ENCODE measurements at regions of chr11 and their contacts with region 1.

Region 1: DNA sequence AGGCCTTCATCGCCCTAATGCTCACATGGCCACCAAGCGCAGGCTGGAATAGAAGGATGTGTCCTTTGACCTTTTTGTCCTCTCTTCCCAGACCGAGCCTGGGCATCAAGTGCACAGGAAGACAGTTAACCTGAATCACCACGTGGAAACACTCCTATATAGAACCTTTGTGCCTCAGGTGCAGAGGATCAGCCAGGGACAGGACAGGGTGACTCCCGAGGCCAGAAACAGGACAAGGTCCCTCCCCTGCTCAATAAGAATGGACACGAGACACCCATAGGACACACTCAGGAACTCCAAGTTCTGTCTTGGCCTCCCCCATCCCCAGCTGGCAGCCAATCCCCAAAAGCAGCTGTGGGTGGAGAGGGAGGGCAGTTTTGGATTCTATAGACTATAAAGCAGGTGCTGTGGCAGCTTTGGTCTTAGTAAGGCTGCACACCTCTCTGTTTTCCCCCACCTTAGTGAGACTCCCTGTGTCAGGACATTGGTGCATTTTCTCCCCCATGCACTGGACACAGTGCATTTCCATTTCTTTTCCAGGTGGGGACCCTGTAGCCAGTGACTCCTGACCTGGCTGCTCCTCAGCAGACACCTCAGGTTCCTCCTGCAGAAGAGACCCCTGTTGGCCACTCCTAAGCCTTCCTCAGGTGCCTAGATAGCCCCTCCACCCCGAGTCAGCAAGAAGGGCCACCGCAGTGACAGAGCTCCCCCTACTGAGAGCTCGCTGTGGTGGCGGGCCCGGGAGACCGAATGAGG is 43.6 kb upstream of the POU2AF1 start:
- DNase-seq: peak; percentile 75
- ATAC-seq: peak; percentile 94
- H3K4me3 Mint-ChIP-seq: no peak overlapping the region
- H3K27ac Mint-ChIP-seq: no peak overlapping the region
- H3K4me1 Mint-ChIP-seq: peaks cover 8% of the 10 kb centered on the region
- H3K27me3 Mint-ChIP-seq: no peaks in the 10 kb centered on the region
- CTCF ChIP-seq: peak; percentile 85

Region 2: GRCh38 chr11:111283945-111284481 is 138.7 kb before region 1 on chr11:
- CTCF ChIA-PET with region 1: interaction called, 330 read pairs
- POLR2A ChIA-PET with region 1: interaction called, 3 read pairs
- intact Hi-C with region 1: loop called (anchors 1 kb)
- DNase-seq: no peak
- ATAC-seq: no peak
- H3K4me3 Mint-ChIP-seq: no peak overlapping the region
- H3K27ac Mint-ChIP-seq: no peak overlapping the region
- H3K4me1 Mint-ChIP-seq: no peaks in the 10 kb centered on the region
- H3K27me3 Mint-ChIP-seq: no peaks in the 10 kb centered on the region
- CTCF ChIP-seq: no peak

Region 3: DNA sequence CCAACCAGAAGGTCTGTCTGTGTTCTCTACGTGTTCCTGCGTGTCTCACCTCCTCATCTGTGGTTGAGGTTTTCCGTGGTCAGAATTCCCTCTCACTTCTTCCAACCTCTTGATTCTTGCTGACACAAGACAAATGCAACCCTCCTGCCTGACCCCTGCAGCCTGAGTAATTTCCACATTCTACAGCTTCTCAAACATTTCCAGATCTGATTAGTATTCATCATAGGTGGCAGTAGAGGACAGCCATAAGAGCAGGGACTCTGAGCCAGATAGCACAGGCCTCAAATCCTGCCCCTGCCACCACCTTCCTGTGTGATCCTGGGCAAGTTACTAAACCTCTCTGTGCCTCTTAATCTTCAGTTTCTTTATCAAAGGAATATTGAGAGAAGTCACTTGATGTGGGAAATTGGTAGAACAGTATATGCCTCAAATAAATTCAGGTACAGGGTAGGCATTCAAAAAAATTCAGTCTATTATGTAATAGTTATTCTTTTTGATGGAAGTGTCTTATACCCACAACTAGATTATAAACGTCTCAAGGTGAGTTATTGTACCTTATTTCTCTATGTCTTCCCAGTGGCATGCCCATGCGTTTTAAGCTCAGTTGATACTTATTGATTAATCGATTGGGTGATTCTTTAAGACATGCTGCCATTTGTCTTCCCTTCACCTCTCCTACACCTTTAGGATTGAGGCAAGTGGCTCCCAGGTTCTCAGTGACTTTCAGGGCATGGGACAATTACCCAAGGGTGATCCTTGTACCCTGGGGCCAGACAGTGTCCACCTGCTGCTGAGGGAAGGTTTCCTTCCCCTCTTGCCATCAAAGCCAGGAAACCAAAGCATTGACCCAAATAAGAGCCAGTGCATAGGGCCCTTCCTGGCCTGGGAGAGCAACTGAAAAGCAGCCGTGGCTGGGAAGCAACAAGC is 63.2 kb before region 1 on chr11:
- CTCF ChIA-PET with region 1: interaction called, 32 read pairs
- POLR2A ChIA-PET with region 1: no interaction called
- intact Hi-C with region 1: loop called (anchors 5 kb)
- DNase-seq: peak; percentile 26
- ATAC-seq: peak; percentile 81
- H3K4me3 Mint-ChIP-seq: no peak overlapping the region
- H3K27ac Mint-ChIP-seq: no peak overlapping the region
- H3K4me1 Mint-ChIP-seq: no peaks in the 10 kb centered on the region
- H3K27me3 Mint-ChIP-seq: no peaks in the 10 kb centered on the region
- CTCF ChIP-seq: no peak

Region 4: DNA sequence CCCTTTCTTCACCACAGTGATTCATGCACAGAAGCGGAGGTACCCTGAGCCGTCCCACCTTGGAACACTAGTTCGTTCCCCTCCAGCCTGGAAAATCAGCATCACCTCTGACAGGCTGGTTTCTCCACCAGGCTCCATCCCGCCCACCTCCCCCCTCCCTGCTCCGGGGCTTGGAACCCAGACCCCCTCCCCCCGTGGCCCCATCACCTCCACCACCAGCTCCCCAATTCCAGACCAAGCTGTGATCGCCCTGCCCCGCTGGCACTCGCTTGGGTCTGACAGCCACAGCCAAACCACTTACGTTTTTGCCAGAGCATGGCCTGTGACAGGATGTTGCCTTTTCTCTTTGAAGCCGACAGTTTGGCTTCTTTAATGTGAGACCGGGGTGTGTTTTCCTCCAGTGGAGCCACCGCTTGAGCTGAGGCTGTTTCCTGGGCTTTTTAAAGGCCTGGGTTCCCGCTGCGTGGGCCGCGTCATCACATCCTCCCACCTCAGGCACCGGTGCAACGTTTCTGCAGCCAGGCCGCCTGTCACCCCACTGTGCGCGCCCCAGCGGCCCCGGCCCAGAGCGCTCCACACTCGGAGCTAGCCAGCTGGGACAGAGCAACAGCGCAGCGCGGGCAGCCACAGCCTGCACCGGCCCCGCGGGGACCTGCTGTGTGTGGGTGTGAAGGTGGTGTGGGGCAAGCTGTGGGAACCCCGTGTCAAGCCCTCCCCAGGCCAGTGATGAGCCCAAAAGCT is 43.6 kb before region 1 on chr11 and contains the start of gene POU2AF1:
- CTCF ChIA-PET with region 1: interaction called, 4 read pairs
- POLR2A ChIA-PET with region 1: interaction called, 9 read pairs
- intact Hi-C with region 1: loop called (anchors 5 kb)
- DNase-seq: peak; percentile 91
- ATAC-seq: peak; percentile 76
- H3K4me3 Mint-ChIP-seq: peak within 1 kb of the TSS; percentile 70
- H3K27ac Mint-ChIP-seq: peak within 1 kb of the TSS; percentile 97
- H3K4me1 Mint-ChIP-seq: peaks cover 63% of the 10 kb centered on the region
- H3K27me3 Mint-ChIP-seq: no peaks in the 10 kb centered on the region
- CTCF ChIP-seq: no peak
- total RNA-seq, gene POU2AF1: 3.6 to 4.5 TPM

Region 5: DNA sequence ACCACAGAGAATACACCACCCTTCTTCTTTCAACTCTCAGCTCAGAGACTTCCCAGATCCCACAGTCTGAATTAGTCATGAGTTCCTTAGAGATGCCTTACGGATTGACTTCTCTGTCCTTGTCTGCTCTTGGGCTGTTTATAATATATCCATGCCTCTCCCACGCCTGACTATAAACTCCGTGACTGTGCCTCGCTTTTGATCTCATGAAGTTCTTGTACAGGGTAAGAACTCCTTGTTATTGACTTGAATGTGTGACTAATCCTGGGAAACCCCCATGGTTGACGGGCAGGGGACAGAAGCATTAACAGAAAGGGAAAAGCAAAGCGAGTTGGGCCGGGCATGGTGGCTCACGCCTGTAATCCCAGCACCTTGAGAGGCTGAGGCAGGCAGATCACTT is 18.8 kb after region 1 on chr11:
- CTCF ChIA-PET with region 1: interaction called, 78 read pairs
- POLR2A ChIA-PET with region 1: no interaction called
- intact Hi-C with region 1: no loop called
- DNase-seq: peak; percentile 44
- ATAC-seq: no peak
- H3K4me3 Mint-ChIP-seq: no peak overlapping the region
- H3K27ac Mint-ChIP-seq: no peak overlapping the region
- H3K4me1 Mint-ChIP-seq: peaks cover 16% of the 10 kb centered on the region
- H3K27me3 Mint-ChIP-seq: no peaks in the 10 kb centered on the region
- CTCF ChIP-seq: no peak

Region 6: DNA sequence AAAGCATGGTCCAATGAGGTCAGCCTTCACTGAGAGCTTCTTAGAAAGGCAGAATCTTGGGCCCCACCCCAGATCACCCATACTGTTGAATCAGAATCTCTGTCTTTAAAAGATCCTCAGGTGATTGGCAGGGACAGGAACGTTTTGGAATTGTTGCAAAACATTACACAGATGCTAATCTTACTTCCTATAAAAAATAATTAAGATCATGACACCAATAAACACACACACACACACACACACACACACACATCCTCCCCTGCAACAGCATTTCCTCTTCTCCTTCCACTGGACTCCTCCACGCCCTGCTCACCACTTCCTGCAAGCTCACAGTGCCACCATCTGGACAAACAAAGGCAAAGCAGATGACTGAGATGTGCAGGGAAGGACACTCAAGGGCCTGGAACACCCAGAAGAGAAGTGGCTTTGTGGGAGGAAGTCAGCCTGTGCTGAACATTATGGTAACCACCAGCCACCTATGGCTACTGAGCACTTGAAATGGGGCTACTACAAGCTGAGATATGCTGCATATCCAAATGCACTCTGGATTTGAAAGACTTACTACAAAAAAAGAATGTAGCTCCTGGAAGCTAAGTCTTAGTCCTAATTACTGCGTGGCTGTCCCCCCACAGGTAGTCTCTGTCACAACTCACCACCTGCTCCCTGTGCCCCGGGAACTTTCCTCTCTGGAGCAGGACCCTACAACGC is 23.9 kb after region 1 on chr11:
- CTCF ChIA-PET with region 1: interaction called, 78 read pairs
- POLR2A ChIA-PET with region 1: no interaction called
- intact Hi-C with region 1: no loop called
- DNase-seq: peak; percentile 80
- ATAC-seq: peak; percentile 100
- H3K4me3 Mint-ChIP-seq: no peak overlapping the region
- H3K27ac Mint-ChIP-seq: peak overlapping the region; percentile 9
- H3K4me1 Mint-ChIP-seq: peaks cover 15% of the 10 kb centered on the region
- H3K27me3 Mint-ChIP-seq: no peaks in the 10 kb centered on the region
- CTCF ChIP-seq: peak; percentile 67

Measured in activated CD8-positive, alpha-beta T cell treated with anti-CD3 and anti-CD28 coated beads for 36 hours (primary cell).